ENCODE measurements at regions of chr17 and their contacts with region 1.

Region 1: DNA sequence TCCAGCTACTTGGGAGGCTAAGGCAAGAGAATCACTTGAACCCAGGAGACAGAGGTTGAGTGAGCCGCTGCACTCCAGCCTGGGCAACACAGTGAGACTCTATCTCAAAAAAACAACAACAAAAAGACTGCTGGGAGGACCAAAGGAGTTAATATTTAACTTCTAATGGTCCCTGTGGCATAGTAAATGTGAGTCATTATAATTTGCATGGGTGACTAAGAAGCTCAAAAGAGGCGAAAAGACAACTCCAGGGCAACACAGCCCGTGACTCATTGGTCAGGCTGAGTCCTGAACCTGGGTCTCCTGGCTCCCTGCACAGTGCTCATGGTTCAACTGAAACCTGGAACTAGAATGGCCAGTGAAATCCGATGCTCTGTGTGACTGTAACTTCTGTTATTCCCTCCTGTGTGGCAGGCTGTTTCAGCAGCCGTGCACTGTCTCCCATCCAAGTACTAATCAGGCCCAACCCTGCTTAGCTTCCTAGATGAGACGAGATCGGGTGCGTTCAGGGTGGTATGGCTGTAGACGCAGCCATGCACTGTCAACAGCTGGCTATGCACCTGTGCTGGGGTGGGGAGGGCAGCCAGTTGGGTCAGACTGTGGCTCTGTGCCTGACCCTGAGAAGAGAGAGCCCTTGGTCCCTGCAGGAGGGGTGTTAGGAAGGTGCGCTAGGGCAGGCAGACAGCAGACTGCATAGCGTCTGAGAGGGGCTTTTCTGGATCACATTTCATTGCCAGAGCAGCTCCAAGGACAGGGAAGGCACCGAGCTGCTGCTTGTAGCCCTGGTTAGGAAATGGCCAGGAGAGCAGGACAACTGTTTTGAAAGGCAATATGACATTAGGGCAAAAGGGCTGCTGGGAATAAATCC is 14.5 kb upstream of the GPRC5C start:
- DNase-seq: peak; percentile 87
- H3K4me3 Mint-ChIP-seq: no peak overlapping the region
- H3K27ac Mint-ChIP-seq: no peak overlapping the region
- H3K4me1 Mint-ChIP-seq: peaks cover 5% of the 10 kb centered on the region
- H3K27me3 Mint-ChIP-seq: no peaks in the 10 kb centered on the region
- CTCF ChIP-seq: no peak

Region 2: GRCh38 chr17:74442670-74443515 is 25.5 kb after region 1 on chr17:
- CTCF ChIA-PET with region 1: interaction called, 3 read pairs
- POLR2A ChIA-PET with region 1: interaction called, 10 read pairs
- intact Hi-C with region 1: no loop called
- DNase-seq: peak; percentile 91
- H3K4me3 Mint-ChIP-seq: peak overlapping the region; percentile 62
- H3K27ac Mint-ChIP-seq: peak overlapping the region; percentile 78
- H3K4me1 Mint-ChIP-seq: peaks cover 39% of the 10 kb centered on the region
- H3K27me3 Mint-ChIP-seq: no peaks in the 10 kb centered on the region
- CTCF ChIP-seq: no peak

Region 3: GRCh38 chr17:74478420-74479100 is 61.1 kb after region 1 on chr17:
- CTCF ChIA-PET with region 1: no interaction called
- POLR2A ChIA-PET with region 1: no interaction called
- intact Hi-C with region 1: no loop called
- DNase-seq: no peak
- H3K4me3 Mint-ChIP-seq: no peak overlapping the region
- H3K27ac Mint-ChIP-seq: no peak overlapping the region
- H3K4me1 Mint-ChIP-seq: no peaks in the 10 kb centered on the region
- H3K27me3 Mint-ChIP-seq: peaks cover 73% of the 10 kb centered on the region
- CTCF ChIP-seq: no peak